HEK293T (cell line): ENCODE measurements at regions of chr16 and their contacts with region 1.

Region 1: GRCh38 chr16:49857423-49858181 is 1.7 kb upstream of the ZNF423 start:
- DNase-seq: peak; percentile 88

Region 2: DNA sequence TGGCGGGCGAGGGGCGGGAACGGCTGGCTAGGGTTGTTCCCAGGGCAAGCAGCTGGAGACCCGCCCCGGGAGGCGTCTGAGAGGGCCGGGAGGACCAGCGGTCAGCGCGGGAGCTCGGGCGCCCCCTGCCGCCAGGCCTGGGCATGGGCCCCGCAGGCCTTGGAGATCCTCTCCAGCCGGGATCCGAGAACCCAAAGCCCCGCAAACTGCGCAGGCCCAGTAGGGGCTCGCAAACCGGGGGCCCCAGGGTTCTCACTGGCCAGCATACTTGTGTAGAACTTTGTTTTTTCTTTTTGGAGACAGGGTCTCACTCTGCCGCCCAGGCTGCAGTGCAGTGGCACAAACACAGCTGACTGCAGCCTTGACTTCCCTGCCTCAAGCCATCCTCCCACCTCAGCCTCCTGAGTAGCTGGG is 19.1 kb after region 1 on chr16:
- CTCF ChIA-PET with region 1: interaction called, 14 read pairs
- POLR2A ChIA-PET with region 1: interaction called, 5 read pairs
- DNase-seq: peak; percentile 96

Region 3: DNA sequence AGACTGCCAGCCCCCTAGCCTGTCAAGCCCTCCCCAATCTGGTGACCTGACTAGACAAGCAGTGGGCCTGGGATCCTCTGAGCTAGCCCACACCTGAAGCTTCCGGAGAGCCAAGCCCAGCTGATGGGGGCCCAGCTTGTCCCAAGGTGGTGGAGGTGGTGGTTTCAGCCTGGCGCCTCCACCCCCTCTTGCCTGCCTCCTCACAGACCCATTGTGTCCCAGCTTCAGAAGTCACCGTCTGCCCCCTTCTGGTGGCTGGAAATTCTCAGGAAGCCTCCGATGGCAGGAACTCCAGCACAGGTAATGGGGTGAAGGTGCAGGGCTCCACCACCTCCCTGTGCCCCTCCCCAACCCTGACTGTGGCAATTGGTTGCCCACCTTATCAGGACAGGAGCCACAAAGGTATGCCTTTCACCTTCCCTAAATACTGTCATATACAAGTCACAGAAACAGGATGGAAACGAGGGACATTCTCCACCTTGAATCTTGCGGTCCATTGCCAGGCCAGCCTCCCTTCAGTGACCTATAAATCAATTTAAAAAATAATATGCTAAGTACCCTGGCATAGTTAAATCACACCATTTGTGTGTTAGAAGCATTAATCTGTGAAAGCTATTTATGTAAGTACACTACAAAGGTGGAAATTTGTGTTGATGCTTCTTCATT is 64.3 kb after region 1 on chr16:
- CTCF ChIA-PET with region 1: interaction called, 10 read pairs
- POLR2A ChIA-PET with region 1: no interaction called
- DNase-seq: peak; percentile 79

Region 4: DNA sequence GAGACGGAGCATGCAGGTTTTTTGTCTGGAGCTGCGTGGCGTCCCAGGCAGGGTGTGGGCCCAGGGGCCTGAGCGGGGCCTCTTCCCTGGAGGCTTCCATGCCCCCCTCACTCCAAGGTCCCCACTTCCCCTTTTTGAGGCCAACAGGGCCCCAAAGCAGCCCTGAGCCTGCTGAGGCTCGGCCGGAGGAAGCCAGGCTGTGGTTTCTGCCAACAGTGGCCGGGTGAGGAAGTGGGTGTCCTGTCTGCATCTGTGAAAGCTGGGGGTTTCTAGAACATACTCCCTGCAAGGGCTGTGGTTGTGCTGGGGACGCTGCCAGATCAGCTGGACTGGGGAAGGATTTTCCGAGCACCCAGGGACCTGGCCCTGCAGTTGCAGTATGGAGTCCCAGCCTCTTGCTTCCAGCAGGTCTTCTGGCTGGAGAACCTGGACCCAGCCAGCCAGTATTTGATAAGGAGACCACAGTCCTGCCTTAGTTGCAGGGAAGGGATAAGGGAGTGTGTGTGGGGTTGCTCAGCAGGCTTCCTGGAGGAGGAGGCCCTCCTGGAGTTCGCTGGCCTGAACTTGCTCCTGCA is 424.4 kb after region 1 on chr16:
- CTCF ChIA-PET with region 1: no interaction called
- POLR2A ChIA-PET with region 1: no interaction called
- DNase-seq: no peak